Caco-2 (cell line): ENCODE measurements at regions of chr6 and their contacts with region 1.

Region 1: GRCh38 chr6:36594029-36594815 is at the start of gene SRSF3:
- DNase-seq: peak; percentile 97
- H3K4me3 ChIP-seq: peak within 1 kb of the TSS; percentile 53
- H3K4me3 Mint-ChIP-seq: peak within 1 kb of the TSS; percentile 81
- H3K27ac Mint-ChIP-seq: peak within 1 kb of the TSS; percentile 97
- H3K4me1 ChIP-seq: peaks cover 16% of the 10 kb centered on the region
- H3K4me1 Mint-ChIP-seq: peaks cover 7% of the 10 kb centered on the region
- H3K27me3 ChIP-seq: no peaks in the 10 kb centered on the region
- H3K27me3 Mint-ChIP-seq: peaks cover 3% of the 10 kb centered on the region
- CTCF ChIP-seq: peak; percentile 40 to 51
- total RNA-seq, gene SRSF3: 422 and 425 TPM in 2 replicates

Region 2: GRCh38 chr6:36576561-36576960 is 17.7 kb before region 1 on chr6:
- CTCF ChIA-PET with region 1: no interaction called
- POLR2A ChIA-PET with region 1: interaction called, 4 read pairs
- intact Hi-C with region 1: loop called (anchors 1 kb)
- DNase-seq: no peak
- H3K4me3 ChIP-seq: no peak overlapping the region
- H3K4me3 Mint-ChIP-seq: no peak overlapping the region
- H3K27ac Mint-ChIP-seq: peak overlapping the region; percentile 89
- H3K4me1 ChIP-seq: peaks cover 38% of the 10 kb centered on the region
- H3K4me1 Mint-ChIP-seq: peaks cover 23% of the 10 kb centered on the region
- H3K27me3 ChIP-seq: no peaks in the 10 kb centered on the region
- H3K27me3 Mint-ChIP-seq: no peaks in the 10 kb centered on the region
- CTCF ChIP-seq: no peak